SK-N-SH (cell line): ENCODE measurements at regions of chr19 and their contacts with region 1.

Region 1: GRCh38 chr19:41563854-41564514 is 12.0 kb upstream of the CEACAM21 start:
- DNase-seq: no peak
- H3K4me3 ChIP-seq: no peak overlapping the region
- H3K27ac ChIP-seq: no peak overlapping the region
- H3K4me1 ChIP-seq: no peaks in the 10 kb centered on the region
- H3K27me3 ChIP-seq: peaks cover 60% of the 10 kb centered on the region
- CTCF ChIP-seq: no peak
- EP300 ChIP-seq: no peak
- RAD21 ChIP-seq: no peak

Region 2: DNA sequence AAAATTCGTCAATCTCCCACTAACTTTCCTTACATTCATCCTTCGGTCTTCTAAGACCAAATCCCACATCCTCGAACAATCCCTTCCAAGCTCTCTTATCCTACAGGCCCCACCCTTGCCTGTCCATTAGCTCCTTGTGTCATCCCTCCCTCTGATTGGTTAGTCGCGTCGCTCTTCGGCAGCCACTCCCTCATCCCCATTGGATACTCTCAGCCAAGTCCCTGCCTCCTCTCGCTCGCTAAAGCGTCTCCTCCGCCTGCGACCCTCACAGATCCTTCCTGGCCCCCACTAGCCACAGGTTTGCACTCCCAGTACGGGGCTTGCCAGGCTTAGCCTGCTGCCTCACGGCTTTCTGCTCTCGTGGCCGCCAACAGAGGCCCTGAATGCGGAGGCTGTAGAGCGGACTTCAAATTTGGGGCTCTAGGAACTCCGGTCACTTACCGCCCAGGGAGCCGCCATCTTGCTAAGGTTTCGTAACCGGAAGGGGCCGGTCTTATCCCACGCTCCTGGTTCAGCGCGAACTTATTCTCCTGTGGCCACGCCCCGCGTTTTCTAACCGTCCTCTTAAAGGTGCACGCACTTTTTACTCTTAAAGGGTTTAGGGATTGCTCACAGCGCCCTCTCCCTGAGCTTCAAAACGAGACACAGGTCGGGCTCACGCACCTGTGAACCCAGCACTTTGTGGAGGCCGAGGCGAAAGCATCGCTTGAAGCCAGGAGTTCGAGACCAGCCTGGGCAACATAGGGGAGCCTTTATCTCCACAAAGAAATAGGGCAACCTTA is 124.4 kb before region 1 on chr19 and contains the start of gene DMAC2:
- CTCF ChIA-PET with region 1: interaction called, 15 read pairs
- POLR2A ChIA-PET with region 1: no interaction called
- DNase-seq: peak; percentile 94
- H3K4me3 ChIP-seq: peak within 1 kb of the TSS; percentile 80 to 90
- H3K27ac ChIP-seq: peak within 1 kb of the TSS; percentile 92 to 93
- H3K4me1 ChIP-seq: peaks cover 0 to 4% of the 10 kb centered on the region in 2 experiments; a peak in 3 of 4 replicates
- H3K27me3 ChIP-seq: peaks cover 18% of the 10 kb centered on the region; the same call in 1 of the 2 replicates
- CTCF ChIP-seq: peak; percentile 64
- EP300 ChIP-seq: no peak
- RAD21 ChIP-seq: peak; percentile 47
- polyA plus RNA-seq, gene DMAC2: 70.2 and 71.4 TPM in 2 replicates

Region 3: GRCh38 chr19:41449079-41449864 is 114.7 kb before region 1 on chr19:
- CTCF ChIA-PET with region 1: interaction called, 184 read pairs
- POLR2A ChIA-PET with region 1: interaction called, 3 read pairs
- DNase-seq: peak; percentile 89
- H3K4me3 ChIP-seq: peak overlapping the region in 1 of 2 experiments; percentile 46; a peak in 1 of 4 replicates
- H3K27ac ChIP-seq: no peak overlapping the region
- H3K4me1 ChIP-seq: no peaks in the 10 kb centered on the region
- H3K27me3 ChIP-seq: peaks cover 80% of the 10 kb centered on the region
- CTCF ChIP-seq: peak; percentile 98
- EP300 ChIP-seq: no peak
- RAD21 ChIP-seq: peak; percentile 79

Region 4: DNA sequence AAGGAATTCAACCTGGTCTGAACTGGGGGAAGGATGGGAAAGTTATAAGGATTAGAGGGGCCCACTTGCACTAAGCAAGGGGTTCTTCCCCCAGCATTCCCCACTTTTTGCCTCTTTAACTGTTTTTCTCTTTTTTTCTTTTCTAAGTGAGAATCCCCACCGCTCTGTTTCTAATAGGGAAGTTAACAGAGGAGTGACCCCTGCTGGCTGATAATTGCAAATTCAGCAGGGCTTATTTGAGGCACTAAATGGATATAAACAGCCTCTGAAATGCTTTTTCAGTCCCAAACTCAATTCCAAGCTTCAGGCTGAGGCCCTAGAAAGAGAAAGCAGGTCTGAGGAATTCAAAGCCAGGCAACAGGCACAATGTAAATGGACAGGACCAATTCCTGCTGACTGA is 26.2 kb before region 1 on chr19:
- CTCF ChIA-PET with region 1: interaction called, 15 read pairs
- POLR2A ChIA-PET with region 1: no interaction called
- DNase-seq: no peak
- H3K4me3 ChIP-seq: no peak overlapping the region
- H3K27ac ChIP-seq: no peak overlapping the region
- H3K4me1 ChIP-seq: no peaks in the 10 kb centered on the region
- H3K27me3 ChIP-seq: peaks cover 57% of the 10 kb centered on the region; the same call in 1 of the 2 replicates
- CTCF ChIP-seq: peak; percentile 59
- EP300 ChIP-seq: no peak
- RAD21 ChIP-seq: no peak

Region 5: DNA sequence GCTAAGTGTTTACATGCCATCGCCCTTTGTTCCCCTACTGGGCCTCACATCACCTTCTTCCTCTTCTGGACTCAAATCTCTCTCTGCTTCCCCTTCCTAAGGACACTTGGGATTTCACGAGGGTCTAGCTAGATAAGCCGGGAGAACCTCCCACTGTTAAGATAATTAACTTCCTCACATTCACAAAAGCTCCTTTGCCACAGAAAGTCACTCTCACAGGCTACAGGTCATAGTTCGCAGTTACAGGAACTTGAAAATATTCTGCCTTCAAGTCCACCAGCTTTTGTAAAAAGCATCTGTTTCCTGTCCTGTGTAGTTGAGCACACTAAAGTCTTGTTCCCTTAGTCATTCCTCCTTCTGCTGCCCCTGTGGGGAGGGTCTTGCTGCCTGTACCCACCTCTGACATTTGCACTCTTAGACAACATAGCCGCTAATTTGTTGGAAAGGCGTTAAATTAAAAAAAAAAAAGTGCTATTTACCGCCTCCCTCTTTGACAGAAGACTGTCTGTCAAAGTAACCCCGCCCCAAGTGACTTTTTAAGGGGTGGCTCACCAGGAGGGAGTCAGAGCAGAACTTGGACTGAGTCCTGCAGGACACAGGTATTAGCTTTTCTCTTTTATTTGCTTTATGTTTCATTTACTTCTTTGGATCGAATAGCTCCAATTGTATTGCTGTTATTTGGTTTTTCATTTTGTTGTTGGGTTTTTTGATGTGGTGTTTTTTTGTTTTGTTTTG is 14.9 kb before region 1 on chr19:
- CTCF ChIA-PET with region 1: interaction called, 21 read pairs
- POLR2A ChIA-PET with region 1: no interaction called
- DNase-seq: no peak
- H3K4me3 ChIP-seq: no peak overlapping the region
- H3K27ac ChIP-seq: no peak overlapping the region
- H3K4me1 ChIP-seq: no peaks in the 10 kb centered on the region
- H3K27me3 ChIP-seq: peaks cover 80% of the 10 kb centered on the region
- CTCF ChIP-seq: no peak
- EP300 ChIP-seq: no peak
- RAD21 ChIP-seq: no peak

Region 6: GRCh38 chr19:41597600-41598041 is 33.6 kb after region 1 on chr19:
- CTCF ChIA-PET with region 1: interaction called, 12 read pairs
- POLR2A ChIA-PET with region 1: no interaction called
- DNase-seq: peak; percentile 79
- H3K4me3 ChIP-seq: no peak overlapping the region
- H3K27ac ChIP-seq: no peak overlapping the region
- H3K4me1 ChIP-seq: no peaks in the 10 kb centered on the region
- H3K27me3 ChIP-seq: peaks cover 3% of the 10 kb centered on the region; the same call in 1 of the 2 replicates
- CTCF ChIP-seq: peak; percentile 95
- EP300 ChIP-seq: no peak
- RAD21 ChIP-seq: peak; percentile 36

Region 7: DNA sequence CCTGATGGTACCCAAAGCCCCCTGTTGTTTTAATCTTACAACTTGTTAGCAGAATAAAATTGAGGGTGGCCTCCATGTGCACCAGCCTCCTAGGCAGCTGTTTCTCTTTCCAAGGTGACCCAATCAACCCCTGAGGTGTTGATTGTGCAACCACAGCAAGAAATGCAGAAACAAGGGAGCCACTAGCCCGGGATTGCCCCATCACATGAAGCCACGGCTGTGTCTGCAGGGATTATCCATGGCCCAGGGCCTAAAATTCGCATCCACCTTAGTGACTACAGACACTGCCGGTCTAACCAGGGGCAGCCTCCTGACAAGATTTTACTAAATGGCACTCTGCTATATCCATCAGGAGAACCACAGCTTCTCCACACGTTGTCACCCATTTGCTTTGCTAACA is 48.5 kb after region 1 on chr19:
- CTCF ChIA-PET with region 1: no interaction called
- POLR2A ChIA-PET with region 1: no interaction called
- DNase-seq: no peak
- H3K4me3 ChIP-seq: no peak overlapping the region
- H3K27ac ChIP-seq: no peak overlapping the region
- H3K4me1 ChIP-seq: no peaks in the 10 kb centered on the region
- H3K27me3 ChIP-seq: no peaks in the 10 kb centered on the region; the same call in 1 of the 2 replicates
- CTCF ChIP-seq: no peak
- EP300 ChIP-seq: no peak
- RAD21 ChIP-seq: no peak